AG04449 (cell line): ENCODE measurements at regions of chr1 and their contacts with region 1.

Region 1: GRCh38 chr1:109263597-109264398 is 14.5 kb downstream of the CELSR2 start:
- DNase-seq: no peak
- H3K4me3 ChIP-seq: no peak overlapping the region
- CTCF ChIP-seq: peak; percentile 98

Region 2: GRCh38 chr1:109248797-109249642 is 14.8 kb before region 1 on chr1 and contains the start of gene CELSR2:
- CTCF ChIA-PET with region 1: interaction called, 50 read pairs
- POLR2A ChIA-PET with region 1: interaction called, 5 read pairs
- DNase-seq: no peak
- H3K4me3 ChIP-seq: peak within 1 kb of the TSS; percentile 52
- CTCF ChIP-seq: no peak